CD14-positive monocyte (primary cell): ENCODE measurements at regions of chr11 and their contacts with region 1.

Region 1: DNA sequence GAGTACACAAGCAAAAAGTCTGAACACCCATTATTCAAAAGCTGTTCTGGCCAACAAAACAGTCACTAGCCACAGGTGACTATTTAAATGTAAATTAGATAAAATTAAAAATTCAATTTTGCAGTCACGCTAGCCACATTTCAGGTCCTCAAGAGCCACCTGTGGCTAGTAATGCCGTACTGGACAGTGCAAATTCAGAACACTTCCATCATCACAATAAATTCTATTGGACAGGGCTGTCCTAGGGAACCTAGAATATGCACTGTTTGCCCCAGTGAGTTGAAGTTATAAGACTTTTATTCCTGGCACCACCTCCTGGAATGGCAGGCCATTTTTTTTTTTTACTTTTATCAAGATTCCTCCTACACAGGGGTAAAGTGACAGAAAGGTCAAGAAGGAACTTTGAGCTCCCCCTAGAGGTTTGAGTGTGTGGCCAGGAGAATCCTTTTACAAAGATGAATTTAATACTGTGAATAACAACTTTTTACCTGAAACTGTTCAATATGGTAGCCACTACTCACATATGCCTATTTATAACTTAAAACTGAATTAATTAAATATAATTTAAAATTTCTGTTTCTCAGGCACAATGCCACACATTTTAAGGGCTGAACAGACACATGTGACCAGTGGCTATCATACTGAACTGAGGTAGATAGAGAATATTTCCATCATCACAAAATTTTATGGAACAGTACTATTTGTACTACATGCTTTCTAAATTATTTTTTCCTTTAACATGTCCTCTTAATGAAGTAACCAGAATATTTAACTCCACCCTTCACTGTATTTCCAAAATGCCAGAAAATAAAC is 6.5 kb downstream of the MSANTD2 start:
- DNase-seq: peak; percentile 20 to 58 (median 48)
- H3K4me3 ChIP-seq: no peak overlapping the region
- H3K4me3 Mint-ChIP-seq: no peak overlapping the region
- H3K27ac ChIP-seq: no peak overlapping the region
- H3K27ac Mint-ChIP-seq: no peak overlapping the region
- H3K4me1 ChIP-seq: peaks cover 6 to 14% of the 10 kb centered on the region in 2 donors
- H3K4me1 Mint-ChIP-seq: peaks cover 26% of the 10 kb centered on the region
- H3K27me3 ChIP-seq: peaks cover 2 to 3% of the 10 kb centered on the region in 2 donors
- H3K27me3 Mint-ChIP-seq: peaks cover 2 to 3% (median 2%) of the 10 kb centered on the region in 3 donors
- CTCF ChIP-seq: peak; percentile 79

Region 2: GRCh38 chr11:124758317-124759203 is 35.1 kb before region 1 on chr11:
- intact Hi-C with region 1: loop called in 1 of 2 experiments (anchors 5 kb)
- DNase-seq: peak; percentile 84 to 88 (median 87)
- H3K4me3 ChIP-seq: peak overlapping the region in 1 of 3 experiments; percentile 58
- H3K4me3 Mint-ChIP-seq: peak overlapping the region; percentile 77 to 94
- H3K27ac ChIP-seq: no peak overlapping the region
- H3K27ac Mint-ChIP-seq: peak overlapping the region in 1 of 7 donors; percentile 27
- H3K4me1 ChIP-seq: peaks cover 53 to 62% of the 10 kb centered on the region in 2 donors
- H3K4me1 Mint-ChIP-seq: peaks cover 50% of the 10 kb centered on the region
- H3K27me3 ChIP-seq: peaks cover 29 to 45% of the 10 kb centered on the region in 2 donors
- H3K27me3 Mint-ChIP-seq: peaks cover 50 to 67% (median 54%) of the 10 kb centered on the region in 3 donors
- CTCF ChIP-seq: peak; percentile 87

Region 3: GRCh38 chr11:124829986-124830385 is 36.3 kb after region 1 on chr11:
- intact Hi-C with region 1: no loop called
- DNase-seq: no peak
- H3K4me3 ChIP-seq: no peak overlapping the region
- H3K4me3 Mint-ChIP-seq: no peak overlapping the region
- H3K27ac ChIP-seq: no peak overlapping the region
- H3K27ac Mint-ChIP-seq: no peak overlapping the region
- H3K4me1 ChIP-seq: no peaks in the 10 kb centered on the region
- H3K4me1 Mint-ChIP-seq: no peaks in the 10 kb centered on the region
- H3K27me3 ChIP-seq: peaks cover 9 to 11% of the 10 kb centered on the region in 2 donors
- H3K27me3 Mint-ChIP-seq: peaks cover 7 to 25% (median 11%) of the 10 kb centered on the region in 3 donors
- CTCF ChIP-seq: no peak

Region 4: DNA sequence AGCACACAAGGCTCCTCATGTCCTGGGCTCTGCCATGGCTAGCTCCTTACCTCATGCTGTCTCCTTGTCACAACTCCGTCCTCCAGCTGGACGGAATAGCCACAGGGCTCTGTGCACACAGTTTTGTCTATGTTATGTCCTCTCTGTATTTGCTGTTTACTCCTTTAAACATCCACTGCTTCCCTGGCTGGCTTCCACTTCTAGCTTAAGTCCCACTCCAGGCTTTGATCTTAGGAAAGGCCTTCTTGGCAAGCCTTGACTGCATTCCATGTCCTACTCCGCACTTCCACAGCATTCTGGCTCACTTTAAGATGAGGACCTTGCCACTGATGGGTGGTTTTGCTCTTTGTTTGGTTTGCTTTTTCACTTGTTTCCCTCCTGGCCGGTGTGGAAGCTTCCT is 48.6 kb after region 1 on chr11:
- intact Hi-C with region 1: no loop called
- DNase-seq: no peak
- H3K4me3 ChIP-seq: no peak overlapping the region
- H3K4me3 Mint-ChIP-seq: peak overlapping the region in 1 of 2 donors; percentile 68
- H3K27ac ChIP-seq: no peak overlapping the region
- H3K27ac Mint-ChIP-seq: peak overlapping the region in 1 of 7 donors; percentile 18
- H3K4me1 ChIP-seq: peaks cover 0 to 10% of the 10 kb centered on the region in 2 donors
- H3K4me1 Mint-ChIP-seq: peaks cover 10% of the 10 kb centered on the region
- H3K27me3 ChIP-seq: peaks cover 97% of the 10 kb centered on the region in 2 donors
- H3K27me3 Mint-ChIP-seq: peaks cover 95 to 99% (median 96%) of the 10 kb centered on the region in 3 donors
- CTCF ChIP-seq: no peak